Uterus (tissue), 4 donors: ENCODE measurements at regions of chr4 and their contacts with region 1.

Region 1: GRCh38 chr4:40309250-40309774 is 25.8 kb upstream of the CHRNA9 start:
- DNase-seq: peak; percentile 86 to 89
- H3K4me3 ChIP-seq: no peak overlapping the region
- H3K27ac ChIP-seq: peak overlapping the region; percentile 12 to 40
- H3K4me1 ChIP-seq: no peaks in the 10 kb centered on the region
- H3K27me3 ChIP-seq: no peaks in the 10 kb centered on the region
- CTCF ChIP-seq: peak; percentile 73 to 86 (median 82)
- POLR2A ChIP-seq: no peak

Region 2: DNA sequence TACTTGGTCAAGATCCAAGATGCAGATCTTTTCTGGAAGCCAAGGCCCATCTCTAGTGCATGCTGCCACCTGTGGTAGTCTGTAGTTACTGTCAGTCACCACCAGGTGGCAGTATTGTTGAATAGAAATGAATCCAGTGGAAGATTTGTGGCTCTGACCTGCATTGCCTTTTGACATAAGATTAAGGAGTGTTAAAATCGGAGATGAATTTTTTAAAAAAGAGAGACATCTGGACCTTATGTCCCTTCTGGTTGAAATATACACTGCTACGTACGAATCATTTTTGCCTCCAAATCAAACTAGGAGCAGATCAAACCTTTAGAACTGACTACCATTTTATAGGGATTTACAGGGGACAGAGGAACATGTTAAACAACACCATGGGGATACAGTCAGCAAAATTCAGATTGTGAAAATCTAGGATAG is 159.3 kb before region 1 on chr4:
- intact Hi-C with region 1: loop called (anchors 10 kb)
- DNase-seq: peak; percentile 35 to 59
- H3K4me3 ChIP-seq: no peak overlapping the region
- H3K27ac ChIP-seq: no peak overlapping the region
- H3K4me1 ChIP-seq: no peaks in the 10 kb centered on the region
- H3K27me3 ChIP-seq: no peaks in the 10 kb centered on the region
- CTCF ChIP-seq: peak; percentile 71 to 76 (median 75)
- POLR2A ChIP-seq: no peak